ENCODE measurements at regions of chr6 and their contacts with region 1.

Region 1: DNA sequence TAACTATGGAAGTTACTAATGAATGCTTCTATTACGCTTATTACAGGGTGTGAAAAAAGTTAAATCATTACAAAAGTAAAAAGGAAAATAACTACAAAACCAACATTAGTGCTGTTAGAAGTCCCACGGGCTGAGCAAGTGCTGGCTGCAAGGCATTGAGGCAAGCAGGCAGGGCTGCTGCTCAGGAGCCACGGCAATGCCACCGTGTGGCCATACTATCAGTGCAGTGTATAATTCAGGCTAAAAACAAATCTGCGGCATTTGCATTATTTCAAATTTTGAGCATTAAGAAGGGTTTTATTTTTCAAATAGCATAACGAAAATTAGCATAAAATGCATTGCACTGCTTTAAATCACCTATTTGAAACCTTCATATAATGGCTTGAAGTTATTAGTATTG is 17.1 kb downstream of the IFNGR1 start:
- DNase-seq: no peak
- H3K4me3 Mint-ChIP-seq: no peak overlapping the region
- H3K27ac Mint-ChIP-seq: no peak overlapping the region
- H3K4me1 Mint-ChIP-seq: peaks cover 3% of the 10 kb centered on the region
- H3K27me3 Mint-ChIP-seq: no peaks in the 10 kb centered on the region

Region 2: DNA sequence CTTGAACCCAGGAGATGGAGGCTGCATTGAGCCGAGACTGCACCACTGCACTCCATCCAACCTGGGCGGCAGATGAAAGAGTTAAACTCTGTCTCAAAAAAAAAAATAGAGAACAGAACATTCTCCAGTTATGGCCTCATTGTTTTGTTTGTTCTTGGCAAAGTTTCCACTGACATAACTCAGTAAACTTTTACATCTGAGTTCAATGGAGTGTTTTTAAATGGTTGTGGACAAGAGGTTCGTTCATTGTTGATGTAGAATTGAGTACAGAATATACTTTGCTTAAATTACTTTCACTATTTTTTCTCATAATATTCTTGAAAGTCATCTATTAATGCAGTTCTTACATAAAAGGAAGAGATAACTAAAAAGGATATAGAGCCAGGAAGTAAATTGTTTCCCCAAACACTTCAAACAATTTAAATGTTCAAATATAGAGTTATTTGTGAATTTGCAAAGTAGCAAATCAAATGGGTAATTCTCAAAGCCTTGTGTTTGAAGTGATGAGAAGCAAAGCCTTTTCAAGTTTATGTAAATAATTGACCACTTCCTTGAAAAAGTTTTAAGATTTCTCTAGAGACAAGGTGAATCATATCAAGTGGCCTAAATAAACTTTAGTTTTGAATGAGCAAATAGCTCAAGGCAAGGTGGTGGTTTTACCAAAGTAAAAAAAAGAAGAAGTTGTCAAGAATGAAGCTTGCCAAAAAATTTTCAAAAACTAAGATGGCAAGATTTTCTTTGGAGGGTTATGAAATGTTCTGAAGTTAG is 59.5 kb after region 1 on chr6:
- CTCF ChIA-PET with region 1: no interaction called
- intact Hi-C with region 1: loop called (anchors 5 kb)
- DNase-seq: no peak
- H3K4me3 Mint-ChIP-seq: no peak overlapping the region
- H3K27ac Mint-ChIP-seq: no peak overlapping the region
- H3K4me1 Mint-ChIP-seq: no peaks in the 10 kb centered on the region
- H3K27me3 Mint-ChIP-seq: peaks cover 12% of the 10 kb centered on the region